ENCODE measurements at regions of chr17 and their contacts with region 1.

Region 1: DNA sequence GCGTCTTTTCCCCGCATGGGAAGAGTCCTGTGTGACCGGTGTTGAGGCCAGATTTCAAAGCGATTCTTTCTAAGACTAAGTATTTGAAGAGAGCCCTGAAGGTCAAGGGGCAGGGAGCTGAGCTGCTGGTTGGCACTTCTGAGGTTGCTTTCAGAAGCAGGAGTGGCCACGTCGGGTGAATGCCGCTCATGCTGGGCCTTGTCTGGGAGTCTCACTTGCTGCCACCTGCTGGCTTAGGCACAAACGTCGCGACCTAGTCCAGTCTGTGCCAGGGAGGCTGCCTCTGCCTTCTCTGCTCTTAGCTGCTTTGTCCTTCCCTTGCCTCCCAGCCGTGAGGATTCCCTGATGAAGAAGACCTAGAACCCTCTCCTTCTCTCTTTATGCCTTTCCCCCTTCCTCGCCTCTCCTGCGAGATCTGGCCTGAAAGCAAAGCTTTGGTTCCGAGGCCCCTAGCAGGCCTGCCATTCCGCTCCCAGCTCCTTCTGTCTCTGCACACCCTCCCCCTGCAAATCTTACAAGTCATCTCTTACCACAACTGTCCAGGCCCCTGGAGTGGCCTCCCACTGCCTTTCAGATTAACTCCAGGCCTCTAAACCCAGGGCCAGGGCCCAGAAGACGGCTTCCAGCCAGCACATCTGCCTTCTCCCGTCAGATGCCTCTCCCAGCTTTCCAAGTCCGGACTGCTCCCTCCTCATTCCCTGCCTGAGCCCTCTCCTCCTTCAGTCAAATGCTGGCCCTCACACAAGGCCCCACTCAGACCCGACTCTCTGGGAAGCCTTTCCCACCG is 11.4 kb downstream of the CTNS start:
- DNase-seq: peak; percentile 71
- H3K4me3 Mint-ChIP-seq: no peak overlapping the region
- H3K27ac Mint-ChIP-seq: no peak overlapping the region
- H3K4me1 Mint-ChIP-seq: no peaks in the 10 kb centered on the region
- H3K27me3 Mint-ChIP-seq: no peaks in the 10 kb centered on the region

Region 2: GRCh38 chr17:3535253-3535995 is 112.5 kb before region 1 on chr17:
- CTCF ChIA-PET with region 1: interaction called, 3 read pairs
- intact Hi-C with region 1: loop called (anchors 2 kb)
- DNase-seq: peak; percentile 71
- H3K4me3 Mint-ChIP-seq: peak overlapping the region; percentile 54
- H3K27ac Mint-ChIP-seq: no peak overlapping the region
- H3K4me1 Mint-ChIP-seq: peaks cover 3% of the 10 kb centered on the region
- H3K27me3 Mint-ChIP-seq: peaks cover 4% of the 10 kb centered on the region

Region 3: GRCh38 chr17:3602499-3602898 is 45.5 kb before region 1 on chr17:
- CTCF ChIA-PET with region 1: interaction called, 7 read pairs
- intact Hi-C with region 1: loop called (anchors 1 kb)
- DNase-seq: peak; percentile 36
- H3K4me3 Mint-ChIP-seq: no peak overlapping the region
- H3K27ac Mint-ChIP-seq: no peak overlapping the region
- H3K4me1 Mint-ChIP-seq: no peaks in the 10 kb centered on the region
- H3K27me3 Mint-ChIP-seq: no peaks in the 10 kb centered on the region

Measured in activated naive CD4-positive, alpha-beta T cell treated with anti-CD3 and anti-CD28 coated beads for 36 hours (primary cell).